ENCODE measurements at regions of chr1 and their contacts with region 1.

Region 1: DNA sequence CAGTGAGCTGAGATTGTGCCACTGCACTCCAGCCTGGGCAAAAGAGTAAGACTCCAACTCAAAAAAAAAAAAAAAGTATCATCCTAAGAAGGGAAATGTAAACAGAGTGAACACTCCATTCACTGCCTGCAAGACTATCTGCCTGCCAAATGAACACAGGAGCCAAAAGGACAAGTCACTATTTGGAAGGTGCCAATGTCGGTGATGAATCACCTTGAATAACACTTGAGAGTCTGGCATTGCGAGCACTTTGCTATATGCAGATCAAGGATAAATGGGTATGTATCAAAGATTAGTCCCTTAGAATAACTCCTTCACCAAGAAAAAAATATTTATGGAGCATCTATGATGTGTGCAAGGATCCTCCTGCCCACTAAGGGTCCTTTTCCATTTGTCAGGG is 6.6 kb downstream of the UBR4 start:
- DNase-seq: no peak
- ATAC-seq: peak; percentile 40
- H3K4me3 ChIP-seq: no peak overlapping the region
- H3K4me1 ChIP-seq: peaks cover 25% of the 10 kb centered on the region
- CTCF ChIP-seq: no peak

Region 2: GRCh38 chr1:18751425-18751824 is 452.0 kb before region 1 on chr1:
- intact Hi-C with region 1: no loop called
- DNase-seq: peak in 1 of 3 donors; percentile 3
- ATAC-seq: no peak
- H3K4me3 ChIP-seq: no peak overlapping the region
- H3K4me1 ChIP-seq: peaks cover 2% of the 10 kb centered on the region
- CTCF ChIP-seq: no peak

Region 3: GRCh38 chr1:19220991-19221390 is 17.6 kb after region 1 on chr1:
- intact Hi-C with region 1: loop called in 1 of 2 experiments (anchors 2 kb)
- DNase-seq: no peak
- ATAC-seq: peak; percentile 56
- H3K4me3 ChIP-seq: no peak overlapping the region
- H3K4me1 ChIP-seq: no peaks in the 10 kb centered on the region
- CTCF ChIP-seq: no peak

Measured in mucosa of descending colon (tissue), 3 donors.